ENCODE measurements at regions of chr11 and their contacts with region 1.

Region 1: GRCh38 chr11:22115470-22116029 is 77.3 kb upstream of the ANO5 start:
- DNase-seq: no peak

Region 2: GRCh38 chr11:21771097-21771496 is 344.5 kb before region 1 on chr11:
- intact Hi-C with region 1: loop called (anchors 5 kb)
- DNase-seq: no peak

Region 3: GRCh38 chr11:22177186-22177585 is 61.6 kb after region 1 on chr11:
- intact Hi-C with region 1: no loop called
- DNase-seq: no peak